Activated T-helper 2 cell treated with anti-CD3 and anti-CD28 coated beads, Interferon-gamma antibody, Interleukin-2, Interleukin-4, amounts not matched to agents 10 μg/mL and 5 μg/mL and 100 μg/mL, durations not matched to agents 14 hours and 24 hours and 36 hours (primary cell): ENCODE measurements at regions of chr14 and their contacts with region 1.

Region 1: GRCh38 chr14:67704484-67705089 is 2.9 kb downstream of the RDH12 start:
- DNase-seq: peak; percentile 18
- H3K4me3 Mint-ChIP-seq: no peak overlapping the region
- H3K27ac Mint-ChIP-seq: no peak overlapping the region
- H3K4me1 Mint-ChIP-seq: peaks cover 2% of the 10 kb centered on the region
- H3K27me3 Mint-ChIP-seq: peaks cover 9% of the 10 kb centered on the region

Region 2: DNA sequence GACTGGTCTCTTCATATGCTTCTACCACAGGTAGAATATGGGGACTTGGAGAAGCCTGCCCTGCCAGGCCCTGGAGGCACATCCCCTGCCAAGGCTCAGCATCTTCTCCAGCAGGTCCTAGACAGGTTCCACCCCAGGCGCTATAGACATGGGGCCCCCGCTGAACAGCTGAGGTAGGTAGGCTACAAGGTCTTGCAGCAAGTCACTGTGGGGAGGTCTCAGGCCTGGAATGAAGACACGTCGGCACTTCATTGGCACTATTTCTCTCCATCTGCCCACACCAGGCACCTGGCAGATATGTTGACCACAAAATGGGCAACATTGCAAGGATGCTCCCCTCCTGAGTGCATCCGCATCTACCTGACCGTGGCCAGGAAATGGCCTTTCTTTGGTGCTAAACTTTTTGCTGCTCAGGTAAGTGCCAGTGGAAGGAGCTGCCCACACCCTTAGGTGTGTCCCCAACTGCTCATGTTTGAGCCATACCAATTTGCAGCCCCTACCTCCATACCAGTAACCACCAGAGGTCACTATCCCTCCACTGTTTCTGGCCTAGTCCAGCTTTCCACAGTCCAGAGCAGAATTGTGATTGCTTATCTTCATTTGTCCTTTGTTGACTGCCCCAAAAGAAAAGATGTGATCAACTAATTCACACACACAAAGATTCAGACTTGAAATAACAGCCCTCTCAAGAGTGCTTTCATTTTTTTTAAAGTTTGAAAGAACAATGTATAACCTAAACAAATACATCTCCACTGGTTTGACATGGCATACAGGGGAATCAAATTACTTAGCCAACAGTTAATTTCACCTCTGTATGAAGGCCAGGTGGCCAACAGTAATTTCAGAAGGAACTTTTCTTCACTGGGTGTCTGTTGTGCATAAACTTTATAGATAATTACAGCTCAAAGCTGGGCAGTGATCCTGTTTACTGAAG is 120.6 kb before region 1 on chr14:
- intact Hi-C with region 1: loop called (anchors 1 kb)
- DNase-seq: no peak
- H3K4me3 Mint-ChIP-seq: no peak overlapping the region
- H3K27ac Mint-ChIP-seq: no peak overlapping the region
- H3K4me1 Mint-ChIP-seq: peaks cover 3% of the 10 kb centered on the region
- H3K27me3 Mint-ChIP-seq: no peaks in the 10 kb centered on the region

Region 3: GRCh38 chr14:67666750-67667449 is 37.7 kb before region 1 on chr14:
- intact Hi-C with region 1: loop called (anchors 2 kb)
- DNase-seq: no peak
- H3K4me3 Mint-ChIP-seq: no peak overlapping the region
- H3K27ac Mint-ChIP-seq: peak overlapping the region; percentile 43
- H3K4me1 Mint-ChIP-seq: peaks cover 27% of the 10 kb centered on the region
- H3K27me3 Mint-ChIP-seq: no peaks in the 10 kb centered on the region

Region 4: DNA sequence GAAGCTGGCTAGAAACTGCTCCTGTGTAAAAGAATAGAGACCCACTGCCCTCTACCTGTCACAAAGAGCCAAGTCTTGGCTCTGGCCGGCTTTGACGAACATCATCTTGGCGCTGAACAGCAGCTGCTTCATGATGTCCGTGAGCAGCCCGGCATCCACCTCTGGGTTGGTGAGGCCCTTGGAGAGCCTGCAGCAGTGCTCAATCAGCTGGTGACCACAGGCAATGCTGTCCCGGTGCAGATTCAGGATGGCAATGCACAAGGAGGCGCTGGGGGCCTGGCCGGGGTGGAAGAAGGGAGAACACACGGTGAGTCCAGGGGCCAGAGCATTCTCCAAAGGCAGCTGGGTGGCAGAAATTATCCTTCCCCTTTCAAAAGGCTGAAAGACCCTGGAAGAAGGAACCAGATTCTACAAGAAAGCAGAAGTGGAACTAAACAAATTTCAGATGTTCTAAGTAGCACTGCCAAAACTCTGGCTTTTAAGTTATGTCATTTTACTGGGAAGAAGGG is 61.6 kb after region 1 on chr14:
- intact Hi-C with region 1: no loop called
- DNase-seq: no peak
- H3K4me3 Mint-ChIP-seq: no peak overlapping the region
- H3K27ac Mint-ChIP-seq: no peak overlapping the region
- H3K4me1 Mint-ChIP-seq: no peaks in the 10 kb centered on the region
- H3K27me3 Mint-ChIP-seq: no peaks in the 10 kb centered on the region